Heart left ventricle (tissue), 16 donors: ENCODE measurements at regions of chr11 and their contacts with region 1.

Region 1: GRCh38 chr11:91248199-91248807 is 976.3 kb upstream of the FAT3 start:
- DNase-seq: peak in 1 of 5 donors; percentile 28
- ATAC-seq: no peak
- H3K4me3 ChIP-seq: no peak overlapping the region
- H3K27ac ChIP-seq: no peak overlapping the region
- H3K4me1 ChIP-seq: no peaks in the 10 kb centered on the region
- H3K27me3 ChIP-seq: no peaks in the 10 kb centered on the region
- CTCF ChIP-seq: peak; percentile 48 to 74 (median 64)
- POLR2A ChIP-seq: no peak

Region 2: DNA sequence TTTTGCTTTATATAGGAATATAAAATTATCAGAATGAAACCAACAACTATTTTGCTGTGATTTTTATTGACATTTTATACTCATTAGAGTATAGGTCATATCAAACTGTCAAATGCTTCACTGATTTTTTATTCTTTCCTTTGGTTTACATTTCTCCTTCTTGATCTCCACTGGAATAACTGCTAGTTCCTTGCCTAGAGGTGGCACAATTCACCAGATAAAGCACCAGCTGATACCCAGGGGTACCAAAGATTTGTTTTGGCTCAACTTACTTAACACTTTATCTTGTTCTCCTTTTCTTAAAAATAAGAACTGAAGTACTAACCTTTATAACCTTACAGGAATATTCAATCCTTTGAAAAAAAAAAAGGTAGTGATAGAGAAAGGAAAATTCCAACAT is 300.4 kb before region 1 on chr11:
- intact Hi-C with region 1: loop called in 3 of 10 experiments (anchors 5 to 10 kb)
- DNase-seq: no peak
- ATAC-seq: no peak
- H3K4me3 ChIP-seq: no peak overlapping the region
- H3K27ac ChIP-seq: no peak overlapping the region
- H3K4me1 ChIP-seq: no peaks in the 10 kb centered on the region
- H3K27me3 ChIP-seq: no peaks in the 10 kb centered on the region
- CTCF ChIP-seq: peak in 5 of 12 donors; percentile 8 to 22 (median 11)
- POLR2A ChIP-seq: no peak

Region 3: GRCh38 chr11:91041626-91042025 is 206.7 kb before region 1 on chr11:
- intact Hi-C with region 1: loop called in 6 of 10 experiments (anchors 5 to 10 kb)
- DNase-seq: no peak
- ATAC-seq: no peak
- H3K4me3 ChIP-seq: no peak overlapping the region
- H3K27ac ChIP-seq: no peak overlapping the region
- H3K4me1 ChIP-seq: no peaks in the 10 kb centered on the region
- H3K27me3 ChIP-seq: no peaks in the 10 kb centered on the region
- CTCF ChIP-seq: peak in 2 of 12 donors; percentile 13 to 24
- POLR2A ChIP-seq: no peak

Region 4: GRCh38 chr11:91312541-91312940 is 64.2 kb after region 1 on chr11:
- intact Hi-C with region 1: no loop called
- DNase-seq: no peak
- ATAC-seq: no peak
- H3K4me3 ChIP-seq: no peak overlapping the region
- H3K27ac ChIP-seq: no peak overlapping the region
- H3K4me1 ChIP-seq: peaks cover 0 to 4% (median 0%) of the 10 kb centered on the region in 12 donors
- H3K27me3 ChIP-seq: no peaks in the 10 kb centered on the region
- CTCF ChIP-seq: no peak
- POLR2A ChIP-seq: no peak